ENCODE measurements at regions of chr11 and their contacts with region 1.

Region 1: DNA sequence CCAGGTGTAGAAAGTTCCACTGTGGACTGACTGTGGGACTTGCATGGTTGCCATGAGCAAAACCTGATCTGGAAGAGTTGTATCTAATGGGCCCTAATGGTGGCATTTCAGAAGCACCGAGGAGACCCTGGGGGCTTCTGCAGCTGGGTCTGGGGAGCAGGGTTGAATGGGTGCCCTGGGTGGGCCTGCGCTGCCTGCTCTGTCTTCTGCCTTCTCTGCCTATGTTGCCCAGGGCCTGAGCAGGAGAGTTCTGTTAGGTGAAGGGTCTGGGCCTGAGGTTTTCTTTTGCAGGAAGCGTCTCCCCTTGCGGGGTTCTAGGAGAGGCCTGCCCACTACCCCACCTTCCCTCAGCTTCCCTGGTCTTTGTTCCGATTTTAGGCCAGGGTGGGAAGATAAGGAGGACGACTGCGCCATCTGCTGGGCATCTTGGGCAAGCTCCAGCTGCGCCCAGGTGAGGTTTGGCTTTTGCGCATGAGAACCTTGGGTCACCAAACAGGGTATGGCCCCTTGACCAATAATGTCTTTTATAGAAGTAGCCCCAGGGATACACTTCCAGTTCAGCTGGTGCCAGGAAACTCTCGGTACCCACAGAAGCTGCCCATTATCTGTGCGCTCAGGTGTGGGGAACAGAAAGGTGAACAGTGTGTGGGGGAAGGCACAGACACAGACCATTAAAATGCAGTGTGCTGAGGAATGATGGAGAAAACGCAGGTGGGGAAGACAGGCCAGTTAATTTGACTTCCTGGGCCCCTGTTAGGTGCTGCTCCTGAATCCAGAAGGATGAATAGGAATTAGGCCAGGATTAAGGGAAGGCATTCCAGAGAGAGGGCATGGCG is 23.2 kb downstream of the COMMD9 start:
- DNase-seq: peak; percentile 85
- H3K4me3 ChIP-seq: no peak overlapping the region
- H3K27ac ChIP-seq: no peak overlapping the region
- H3K4me1 ChIP-seq: peaks cover 0 to 6% (median 2%) of the 10 kb centered on the region in 6 donors
- H3K27me3 ChIP-seq: peaks cover 0 to 4% (median 0%) of the 10 kb centered on the region in 7 donors
- CTCF ChIP-seq: peak; percentile 61 to 89 (median 81)
- POLR2A ChIP-seq: no peak

Region 2: GRCh38 chr11:35485656-35486322 is 780.2 kb before region 1 on chr11:
- intact Hi-C with region 1: loop called (anchors 10 kb)
- DNase-seq: peak; percentile 85
- H3K4me3 ChIP-seq: no peak overlapping the region
- H3K27ac ChIP-seq: no peak overlapping the region
- H3K4me1 ChIP-seq: peaks cover 0 to 5% (median 0%) of the 10 kb centered on the region in 6 donors
- H3K27me3 ChIP-seq: peaks cover 0 to 40% (median 0%) of the 10 kb centered on the region in 7 donors
- CTCF ChIP-seq: peak; percentile 33 to 96 (median 89)
- POLR2A ChIP-seq: no peak

Region 3: DNA sequence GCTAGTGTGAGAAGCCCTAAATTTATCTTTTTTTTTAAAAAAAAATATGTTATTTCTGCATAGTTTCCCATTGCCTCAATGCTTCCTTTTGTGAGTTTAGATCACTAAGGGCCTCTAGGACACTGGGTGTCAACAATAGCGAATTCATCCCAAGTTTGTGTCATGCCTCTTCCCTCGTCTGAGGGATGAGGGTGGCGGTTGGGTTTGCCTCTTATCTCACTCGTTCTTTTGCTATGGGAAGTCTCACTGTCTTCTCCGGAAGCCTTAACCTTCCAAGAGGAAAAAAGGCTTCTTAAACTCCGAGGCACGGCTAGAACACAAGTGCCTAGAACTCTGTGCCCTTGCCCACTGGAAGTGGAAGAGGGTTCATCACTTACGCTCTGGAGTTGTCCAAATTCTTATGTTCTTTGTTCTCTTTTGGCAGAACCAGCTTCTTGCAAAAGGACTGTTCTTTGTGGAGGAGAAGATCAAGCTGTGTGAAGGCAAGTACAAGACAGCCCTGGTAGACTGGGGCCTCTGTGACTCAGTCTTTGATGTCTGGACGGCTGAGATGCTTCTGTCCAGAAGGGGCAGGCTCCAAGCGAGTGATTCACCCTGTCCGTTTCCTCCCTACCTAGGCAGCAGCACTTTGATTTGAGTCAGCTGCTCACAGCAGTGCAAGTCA is 165.6 kb after region 1 on chr11:
- intact Hi-C with region 1: no loop called
- DNase-seq: no peak
- H3K4me3 ChIP-seq: no peak overlapping the region
- H3K27ac ChIP-seq: peak overlapping the region in 2 of 8 donors; percentile 0 to 17
- H3K4me1 ChIP-seq: peaks cover 8 to 74% (median 33%) of the 10 kb centered on the region in 6 donors
- H3K27me3 ChIP-seq: no peaks in the 10 kb centered on the region
- CTCF ChIP-seq: no peak
- POLR2A ChIP-seq: no peak